ENCODE measurements at regions of chr4 and their contacts with region 1.

Region 1: GRCh38 chr4:27048429-27049238 is 188.0 kb downstream of the STIM2 start:
- DNase-seq: peak; percentile 47
- H3K4me3 Mint-ChIP-seq: peak overlapping the region; percentile 31
- H3K27ac Mint-ChIP-seq: no peak overlapping the region
- H3K4me1 Mint-ChIP-seq: peaks cover 4% of the 10 kb centered on the region
- H3K27me3 Mint-ChIP-seq: peaks cover 31% of the 10 kb centered on the region

Region 2: DNA sequence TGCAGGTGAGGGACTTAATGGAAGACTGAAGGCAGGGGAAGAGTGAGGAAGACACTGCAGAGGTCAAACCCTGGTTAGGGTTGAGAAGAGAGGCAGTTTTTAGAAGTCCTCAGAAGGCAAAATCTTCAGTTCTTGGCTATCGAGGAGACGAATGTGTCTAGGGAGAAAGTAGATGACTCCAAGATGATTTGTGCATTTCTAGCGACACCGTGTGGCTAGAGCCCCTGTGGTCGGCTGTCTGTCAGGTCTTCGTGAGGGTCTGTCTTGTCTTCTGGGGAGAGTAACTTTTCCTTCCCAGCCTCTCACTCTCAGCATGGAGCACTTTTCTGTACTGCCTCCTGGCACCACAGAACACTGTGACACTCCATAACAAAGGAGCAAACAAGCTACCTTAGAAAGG is 270.1 kb after region 1 on chr4:
- intact Hi-C with region 1: loop called (anchors 2 kb)
- DNase-seq: peak; percentile 59
- H3K4me3 Mint-ChIP-seq: no peak overlapping the region
- H3K27ac Mint-ChIP-seq: no peak overlapping the region
- H3K4me1 Mint-ChIP-seq: no peaks in the 10 kb centered on the region
- H3K27me3 Mint-ChIP-seq: peaks cover 2% of the 10 kb centered on the region